ENCODE measurements at regions of chr2 and their contacts with region 1.

Region 1: DNA sequence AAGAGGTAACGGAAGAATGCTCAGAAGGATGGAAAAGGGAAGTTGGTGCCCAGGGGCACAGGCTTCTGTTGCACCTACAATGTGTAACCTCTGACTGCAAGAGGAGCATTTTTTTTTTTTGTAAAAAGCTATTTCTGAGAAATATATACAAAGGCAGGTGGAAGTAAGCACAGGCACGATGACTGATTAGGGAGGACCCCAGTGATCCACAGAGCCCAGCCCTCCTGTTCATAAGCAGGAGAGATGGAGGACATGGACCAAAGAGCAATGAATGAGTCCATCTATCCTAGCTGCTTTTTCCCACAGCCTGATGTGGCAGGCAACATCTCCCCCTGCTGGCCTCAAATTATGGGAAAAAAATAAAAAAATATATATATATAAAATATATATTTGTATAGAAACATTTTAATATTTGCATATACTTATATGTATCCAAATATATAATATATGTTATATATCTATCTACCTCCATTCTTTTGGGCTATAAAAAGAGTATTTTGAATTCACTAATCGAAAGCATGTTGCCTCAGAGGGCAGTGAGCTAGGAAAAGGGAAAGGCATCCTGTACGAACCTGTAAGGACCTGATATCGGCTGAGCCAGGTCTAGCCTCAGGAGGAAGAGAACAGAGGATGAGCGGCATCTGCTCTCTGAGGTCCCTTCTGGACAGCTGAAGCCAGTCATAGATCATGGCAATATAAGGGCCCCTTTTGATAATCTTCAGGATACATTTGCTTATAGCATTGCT is 166.0 kb upstream of the STK17B start:
- DNase-seq: peak; percentile 58
- ATAC-seq: peak; percentile 51
- H3K4me3 ChIP-seq: no peak overlapping the region
- H3K4me3 Mint-ChIP-seq: no peak overlapping the region
- H3K27ac ChIP-seq: peak overlapping the region in 1 of 2 donors; percentile 52
- H3K27ac Mint-ChIP-seq: peak overlapping the region; percentile 43
- H3K4me1 ChIP-seq: peaks cover 10 to 11% of the 10 kb centered on the region in 2 donors
- H3K4me1 Mint-ChIP-seq: peaks cover 19% of the 10 kb centered on the region
- H3K27me3 ChIP-seq: no peaks in the 10 kb centered on the region
- H3K27me3 Mint-ChIP-seq: no peaks in the 10 kb centered on the region
- CTCF ChIP-seq: peak; percentile 66

Region 2: DNA sequence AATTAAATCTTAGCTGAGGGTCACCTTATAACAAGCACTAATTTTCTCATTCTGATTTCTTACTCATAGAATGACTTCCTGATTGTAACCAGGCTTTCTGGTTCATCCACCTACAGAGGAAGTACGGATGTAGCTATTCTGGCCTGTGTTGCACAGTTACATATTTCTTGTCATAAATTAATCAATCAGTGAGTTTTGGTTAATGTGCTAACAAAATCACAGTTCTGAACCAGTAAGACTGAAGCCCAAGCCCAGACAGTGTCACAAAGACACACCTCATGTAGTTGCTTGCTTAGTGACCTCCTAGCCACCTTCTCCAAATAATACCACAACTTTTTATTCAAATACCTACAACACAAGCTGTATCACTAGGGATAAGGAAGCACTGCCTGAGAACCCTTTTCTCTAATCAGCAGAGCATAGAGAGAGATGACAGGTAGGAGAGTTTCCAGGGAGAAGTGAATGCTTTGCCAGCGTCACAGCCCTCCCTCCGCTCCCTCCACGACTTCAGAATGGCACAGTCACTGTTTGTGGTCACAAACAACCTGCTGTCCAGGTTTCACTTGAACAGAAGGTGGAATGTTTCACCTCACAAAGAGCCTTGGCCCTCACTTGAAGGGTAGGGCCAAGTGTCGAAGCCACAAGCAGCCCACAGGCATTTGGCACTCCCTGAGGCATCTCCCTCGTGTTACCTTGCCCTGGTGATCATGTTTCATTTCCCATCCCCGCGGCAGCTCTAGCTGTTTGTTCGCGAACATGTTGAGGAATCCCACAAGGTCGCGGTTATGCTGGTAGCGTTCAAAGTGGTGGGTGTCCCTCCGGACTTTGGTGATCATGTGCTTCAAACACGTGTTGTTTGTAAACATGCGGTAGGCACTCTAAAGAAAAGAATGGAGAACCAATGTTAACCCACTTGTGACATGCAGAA is 45.2 kb before region 1 on chr2:
- CTCF ChIA-PET with region 1: interaction called, 4 read pairs
- POLR2A ChIA-PET with region 1: no interaction called
- intact Hi-C with region 1: loop called (anchors 2 kb)
- DNase-seq: peak; percentile 43
- ATAC-seq: peak; percentile 56
- H3K4me3 ChIP-seq: no peak overlapping the region
- H3K4me3 Mint-ChIP-seq: peak overlapping the region; percentile 74
- H3K27ac ChIP-seq: peak overlapping the region; percentile 28 to 55
- H3K27ac Mint-ChIP-seq: peak overlapping the region; percentile 86
- H3K4me1 ChIP-seq: peaks cover 47 to 51% of the 10 kb centered on the region in 2 donors
- H3K4me1 Mint-ChIP-seq: peaks cover 53% of the 10 kb centered on the region
- H3K27me3 ChIP-seq: no peaks in the 10 kb centered on the region
- H3K27me3 Mint-ChIP-seq: no peaks in the 10 kb centered on the region
- CTCF ChIP-seq: no peak

Region 3: GRCh38 chr2:196403471-196403870 is 66.1 kb after region 1 on chr2:
- CTCF ChIA-PET with region 1: no interaction called
- POLR2A ChIA-PET with region 1: no interaction called
- intact Hi-C with region 1: no loop called
- DNase-seq: no peak
- ATAC-seq: no peak
- H3K4me3 ChIP-seq: no peak overlapping the region
- H3K4me3 Mint-ChIP-seq: no peak overlapping the region
- H3K27ac ChIP-seq: no peak overlapping the region
- H3K27ac Mint-ChIP-seq: no peak overlapping the region
- H3K4me1 ChIP-seq: no peaks in the 10 kb centered on the region
- H3K4me1 Mint-ChIP-seq: no peaks in the 10 kb centered on the region
- H3K27me3 ChIP-seq: peaks cover 0 to 2% (median 0%) of the 10 kb centered on the region in 4 experiments
- H3K27me3 Mint-ChIP-seq: no peaks in the 10 kb centered on the region
- CTCF ChIP-seq: no peak

Region 4: GRCh38 chr2:196528486-196529223 is 191.3 kb after region 1 on chr2:
- CTCF ChIA-PET with region 1: no interaction called
- POLR2A ChIA-PET with region 1: no interaction called
- intact Hi-C with region 1: no loop called
- DNase-seq: no peak
- ATAC-seq: no peak
- H3K4me3 ChIP-seq: no peak overlapping the region
- H3K4me3 Mint-ChIP-seq: no peak overlapping the region
- H3K27ac ChIP-seq: no peak overlapping the region
- H3K27ac Mint-ChIP-seq: no peak overlapping the region
- H3K4me1 ChIP-seq: no peaks in the 10 kb centered on the region
- H3K4me1 Mint-ChIP-seq: no peaks in the 10 kb centered on the region
- H3K27me3 ChIP-seq: peaks cover 0 to 3% (median 0%) of the 10 kb centered on the region in 4 experiments
- H3K27me3 Mint-ChIP-seq: peaks cover 3% of the 10 kb centered on the region
- CTCF ChIP-seq: no peak

Measured in B cell (primary cell).